ENCODE measurements at regions of chr15 and their contacts with region 1.

Region 1: DNA sequence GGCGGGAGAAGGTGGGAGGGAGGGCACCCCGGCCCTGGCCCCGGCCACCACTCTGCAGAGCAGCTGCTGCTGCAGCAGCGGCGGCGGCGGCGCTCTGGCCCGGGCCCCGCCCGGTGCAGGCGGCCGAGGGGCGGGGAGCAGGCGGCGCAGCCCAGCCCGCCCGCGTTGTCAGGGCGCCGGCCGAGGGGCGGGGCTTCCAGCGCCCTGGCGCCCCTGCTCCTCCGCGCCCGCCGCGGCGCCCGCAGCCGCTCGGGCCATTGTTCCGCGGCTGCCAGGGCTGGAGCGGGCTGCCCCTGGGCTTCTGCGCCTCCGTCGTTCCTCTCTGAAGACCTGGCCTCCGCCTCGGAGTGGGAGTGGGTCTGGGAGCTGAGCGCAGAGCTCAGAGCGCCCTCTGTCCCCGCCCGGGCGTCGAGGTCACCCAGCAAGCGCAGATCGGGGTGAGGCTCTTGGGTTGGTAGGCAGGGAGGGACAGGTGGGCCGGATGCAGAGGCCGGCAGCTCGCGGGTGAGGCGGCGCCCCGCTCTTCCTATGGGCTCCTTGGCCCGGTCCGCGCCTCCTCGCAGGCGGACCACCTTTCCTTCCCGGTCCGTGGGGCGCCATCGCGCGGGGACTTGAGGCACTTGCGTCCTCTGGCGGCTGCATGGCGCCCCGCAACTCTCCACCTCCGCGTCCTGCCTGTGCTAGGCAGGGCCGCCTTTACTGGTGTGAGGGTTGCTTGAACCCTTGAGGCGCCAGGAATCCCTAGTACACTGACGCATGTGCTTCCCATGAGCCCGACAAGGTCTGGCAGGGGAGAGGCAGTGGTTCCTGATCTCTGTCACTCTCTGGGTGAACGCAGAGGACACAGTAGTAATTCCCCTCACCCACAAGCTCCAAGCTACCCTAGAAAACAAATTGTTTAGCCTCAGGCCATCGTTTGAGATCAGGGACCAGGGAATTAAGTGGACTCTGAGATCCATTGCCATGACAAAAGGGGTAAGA is at the start of gene LPCAT4:
- DNase-seq: peak; percentile 87 to 96
- ATAC-seq: peak; percentile 87 to 90
- H3K4me3 ChIP-seq: peak within 1 kb of the TSS; percentile 97
- H3K27ac ChIP-seq: peak within 1 kb of the TSS; percentile 89 to 97
- H3K4me1 ChIP-seq: peaks cover 22% of the 10 kb centered on the region
- CTCF ChIP-seq: peak; percentile 99
- EP300 ChIP-seq: no peak
- POLR2A ChIP-seq: peak; percentile 90
- RAD21 ChIP-seq: peak; percentile 75 to 93
- polyA plus RNA-seq, gene LPCAT4: 42.9 and 50.7 TPM in 2 replicates

Region 2: DNA sequence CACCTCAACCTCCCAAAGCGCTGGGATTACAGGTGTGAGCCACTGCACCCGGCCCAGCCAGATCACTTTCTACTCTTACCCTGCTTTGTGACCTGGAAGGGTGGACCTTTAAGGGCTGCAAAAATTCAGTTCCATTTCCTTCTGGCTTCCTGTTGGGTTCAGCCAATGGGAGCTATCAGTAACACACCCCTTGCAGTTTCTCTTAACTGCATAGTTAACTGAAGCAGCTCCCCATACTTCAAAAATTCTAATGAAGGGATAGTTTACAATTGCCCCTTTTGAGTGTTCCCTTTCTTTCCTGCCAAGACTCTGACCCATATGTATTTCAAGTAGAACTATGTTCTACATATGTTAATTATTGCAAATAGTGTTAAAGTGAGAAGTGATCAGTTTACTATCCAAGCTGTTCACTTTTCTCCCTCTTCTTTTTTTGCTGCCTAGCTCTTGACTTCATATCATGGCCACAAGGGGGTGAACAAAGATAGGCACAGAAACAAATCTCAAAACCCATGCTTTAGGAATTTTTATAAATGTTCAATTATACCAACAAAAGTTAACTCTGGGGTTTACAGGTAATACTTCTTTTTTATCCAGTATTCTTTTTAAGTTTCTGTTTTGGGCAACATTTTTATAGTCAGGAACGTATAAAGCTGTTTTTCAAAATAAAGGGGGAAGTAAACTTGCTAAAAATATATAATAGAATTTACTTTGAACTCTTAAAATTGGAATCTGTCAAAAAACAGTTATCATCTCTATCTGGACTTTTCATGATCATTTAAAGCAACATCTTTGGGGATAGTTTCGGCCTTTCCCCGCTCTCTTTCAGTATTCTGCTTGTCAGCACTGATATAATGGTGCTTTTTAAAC is 257.4 kb before region 1 on chr15:
- CTCF ChIA-PET with region 1: interaction called, 35 read pairs
- POLR2A ChIA-PET with region 1: interaction called, 6 read pairs
- DNase-seq: peak; percentile 34 to 64
- ATAC-seq: peak; percentile 79; a peak in 5 of 6 replicates
- H3K4me3 ChIP-seq: no peak overlapping the region
- H3K27ac ChIP-seq: no peak overlapping the region
- H3K4me1 ChIP-seq: no peaks in the 10 kb centered on the region
- CTCF ChIP-seq: peak; percentile 94
- EP300 ChIP-seq: no peak
- POLR2A ChIP-seq: no peak
- RAD21 ChIP-seq: peak; percentile 91 to 96

Region 3: DNA sequence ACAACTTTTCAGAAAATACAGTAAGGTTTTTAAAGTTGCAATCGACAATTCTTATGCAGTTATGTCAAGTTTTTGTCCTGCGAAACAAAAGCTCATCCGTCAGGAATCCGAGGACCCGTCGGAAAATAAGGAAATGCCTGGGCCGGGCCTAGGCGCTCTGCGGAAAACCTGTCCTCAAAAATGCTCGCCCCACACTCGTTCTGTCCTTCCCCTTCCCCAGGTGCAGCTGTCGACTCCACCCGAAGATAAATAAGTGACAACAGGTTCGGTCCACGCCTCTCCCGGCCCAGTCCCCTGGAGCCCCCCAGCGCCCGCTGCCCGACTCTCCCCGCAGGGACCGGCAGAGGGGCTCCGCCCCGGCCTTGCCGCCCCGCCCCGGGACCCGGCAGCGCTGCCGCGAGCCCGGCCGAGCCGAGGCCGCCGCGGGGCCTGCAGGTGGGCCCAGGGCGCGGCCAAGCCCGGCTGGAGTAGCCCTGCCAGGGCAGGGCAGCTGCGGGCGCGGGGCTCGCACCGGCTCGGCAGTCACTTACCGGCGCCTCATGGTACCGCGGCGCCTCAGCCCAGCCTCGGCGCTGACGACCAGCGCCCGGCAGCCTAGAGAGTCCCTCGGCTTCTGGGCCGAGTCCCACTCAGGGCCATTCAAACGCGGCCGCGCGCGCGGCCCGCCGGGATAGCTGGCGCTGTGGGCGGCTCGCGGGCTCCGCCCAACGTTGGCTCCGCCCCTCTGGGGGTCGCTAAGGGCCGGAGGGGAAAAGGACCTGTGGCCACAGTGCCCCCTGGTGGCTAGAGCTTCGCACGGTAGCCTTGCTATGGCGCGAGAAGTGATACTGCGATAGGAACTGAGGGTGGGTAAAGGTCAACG is 157.7 kb before region 1 on chr15 and contains the start of gene KATNBL1:
- CTCF ChIA-PET with region 1: interaction called, 23 read pairs
- POLR2A ChIA-PET with region 1: interaction called, 5 read pairs
- DNase-seq: peak; percentile 86 to 95
- ATAC-seq: peak; percentile 97 to 98
- H3K4me3 ChIP-seq: peak within 1 kb of the TSS; percentile 60
- H3K27ac ChIP-seq: peak within 1 kb of the TSS; percentile 89 to 94
- H3K4me1 ChIP-seq: peaks cover 12% of the 10 kb centered on the region; the same call in 2 of the 3 replicates
- CTCF ChIP-seq: peak; percentile 95
- EP300 ChIP-seq: no peak
- POLR2A ChIP-seq: peak; percentile 93
- RAD21 ChIP-seq: peak; percentile 93 to 96
- polyA plus RNA-seq, gene KATNBL1: 46.6 and 75.8 TPM in 2 replicates

Region 4: GRCh38 chr15:34223904-34224596 is 143.3 kb before region 1 on chr15:
- CTCF ChIA-PET with region 1: interaction called, 10 read pairs
- POLR2A ChIA-PET with region 1: interaction called, 4 read pairs
- DNase-seq: peak; percentile 29 to 35
- ATAC-seq: peak; percentile 30 to 53; a peak in 4 of 6 replicates
- H3K4me3 ChIP-seq: peak overlapping the region; percentile 78
- H3K27ac ChIP-seq: peak overlapping the region; percentile 86 to 92
- H3K4me1 ChIP-seq: peaks cover 4% of the 10 kb centered on the region
- CTCF ChIP-seq: peak; percentile 15; the same call in 2 of the 3 replicates
- EP300 ChIP-seq: no peak
- POLR2A ChIP-seq: 0 out of 2 replicates have a peak, but pooled peaks have one; percentile 8
- RAD21 ChIP-seq: 0 out of 5 replicates have a peak, but pooled peaks of 1 of the 2 experiments have one; percentile 22

Region 5: DNA sequence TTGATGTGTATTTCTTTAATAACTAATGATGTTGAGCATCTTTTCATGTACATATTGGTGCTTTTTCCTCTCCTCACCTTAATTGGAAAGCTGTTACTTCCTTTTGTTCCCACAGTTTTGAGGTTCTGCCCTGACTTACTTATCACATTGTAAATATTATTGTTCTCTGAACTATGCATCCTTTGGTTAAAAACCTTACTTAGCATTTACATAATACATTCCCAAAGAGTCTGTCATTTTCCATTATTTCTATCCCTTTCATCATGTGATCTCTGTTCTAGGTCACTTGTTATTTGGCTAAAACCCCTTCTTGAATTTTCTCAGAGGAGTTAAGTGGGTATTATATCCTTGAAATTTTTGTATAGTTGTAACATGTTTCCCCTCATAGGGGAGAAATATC is 62.8 kb before region 1 on chr15:
- CTCF ChIA-PET with region 1: interaction called, 10 read pairs
- POLR2A ChIA-PET with region 1: no interaction called
- DNase-seq: no peak
- ATAC-seq: no peak
- H3K4me3 ChIP-seq: no peak overlapping the region
- H3K27ac ChIP-seq: no peak overlapping the region
- H3K4me1 ChIP-seq: no peaks in the 10 kb centered on the region
- CTCF ChIP-seq: no peak
- EP300 ChIP-seq: no peak
- POLR2A ChIP-seq: no peak
- RAD21 ChIP-seq: no peak

Region 6: DNA sequence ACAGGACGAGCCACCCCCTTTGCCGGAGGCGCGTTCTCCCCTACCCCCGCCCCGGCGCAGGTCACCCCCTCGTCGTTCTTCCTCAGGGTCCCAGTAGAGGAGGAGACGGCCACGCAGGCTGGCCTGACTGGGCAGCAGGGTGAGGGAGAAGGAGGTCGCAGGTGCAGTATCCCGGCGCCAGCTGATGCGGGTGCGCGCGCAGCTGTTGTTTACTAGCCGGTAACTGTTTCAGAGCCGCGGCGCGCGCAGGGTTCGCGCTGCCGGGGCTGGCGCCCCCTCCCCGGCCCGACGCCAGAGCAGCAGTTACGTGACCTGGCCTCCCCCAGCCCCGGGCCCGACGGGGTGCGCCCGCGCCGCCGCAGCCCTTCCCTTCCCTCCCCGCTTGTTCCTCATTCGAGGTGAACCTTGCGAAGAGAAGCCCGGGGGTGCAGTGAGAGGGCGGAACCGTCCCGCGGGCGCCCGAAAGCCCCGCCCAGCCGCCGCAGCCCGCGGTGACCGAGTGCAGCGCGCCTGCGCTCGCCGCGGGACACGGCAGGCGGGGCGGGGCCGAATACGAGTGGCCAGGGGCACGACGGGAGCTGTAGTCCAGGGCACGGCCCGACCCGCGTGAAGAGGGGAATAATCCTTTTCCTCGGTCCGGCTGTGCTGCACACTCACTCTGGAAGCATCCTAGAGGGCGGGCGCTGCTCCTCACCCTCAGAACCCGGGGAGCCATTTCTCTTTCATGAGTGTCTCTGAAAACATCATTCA is 29.7 kb before region 1 on chr15 and contains the start of gene SLC12A6:
- CTCF ChIA-PET with region 1: interaction called, 80 read pairs
- POLR2A ChIA-PET with region 1: interaction called, 20 read pairs
- DNase-seq: peak; percentile 90 to 91
- ATAC-seq: peak; percentile 94 to 96
- H3K4me3 ChIP-seq: peak within 1 kb of the TSS; percentile 64
- H3K27ac ChIP-seq: peak within 1 kb of the TSS; percentile 83 to 95
- H3K4me1 ChIP-seq: peaks cover 15% of the 10 kb centered on the region; the same call in 2 of the 3 replicates
- CTCF ChIP-seq: no peak
- EP300 ChIP-seq: no peak
- POLR2A ChIP-seq: peak; percentile 57
- RAD21 ChIP-seq: 0 out of 5 replicates have a peak, but pooled peaks of 1 of the 2 experiments have one; percentile 18
- polyA plus RNA-seq, gene SLC12A6: 21.3 and 21.8 TPM in 2 replicates

Measured in A549 (cell line).